ENCODE measurements at regions of chr21 and their contacts with region 1.

Region 1: GRCh38 chr21:33588485-33589335 is at the start of gene DONSON:
- DNase-seq: peak; percentile 63 to 87
- ATAC-seq: peak; percentile 93 to 95
- H3K4me3 ChIP-seq: peak within 1 kb of the TSS; percentile 55 to 75 (median 70)
- H3K27ac ChIP-seq: peak within 1 kb of the TSS; percentile 78 to 90 (median 84)
- H3K4me1 ChIP-seq: peaks cover 10 to 14% of the 10 kb centered on the region in 2 donors
- H3K27me3 ChIP-seq: no peaks in the 10 kb centered on the region
- CTCF ChIP-seq: peak in 2 of 5 experiments; percentile 6
- POLR2A ChIP-seq: peak; percentile 55 to 68
- total RNA-seq, gene DONSON: 3.6 to 5.3 (median 4.2) TPM

Region 2: GRCh38 chr21:33514229-33514628 is 74.5 kb before region 1 on chr21:
- in situ Hi-C with region 1: no loop called
- intact Hi-C with region 1: no loop called
- DNase-seq: no peak
- ATAC-seq: peak in 1 of 2 donors; percentile 30
- H3K4me3 ChIP-seq: no peak overlapping the region
- H3K27ac ChIP-seq: no peak overlapping the region
- H3K4me1 ChIP-seq: no peaks in the 10 kb centered on the region
- H3K27me3 ChIP-seq: no peaks in the 10 kb centered on the region
- CTCF ChIP-seq: no peak
- POLR2A ChIP-seq: no peak

Region 3: DNA sequence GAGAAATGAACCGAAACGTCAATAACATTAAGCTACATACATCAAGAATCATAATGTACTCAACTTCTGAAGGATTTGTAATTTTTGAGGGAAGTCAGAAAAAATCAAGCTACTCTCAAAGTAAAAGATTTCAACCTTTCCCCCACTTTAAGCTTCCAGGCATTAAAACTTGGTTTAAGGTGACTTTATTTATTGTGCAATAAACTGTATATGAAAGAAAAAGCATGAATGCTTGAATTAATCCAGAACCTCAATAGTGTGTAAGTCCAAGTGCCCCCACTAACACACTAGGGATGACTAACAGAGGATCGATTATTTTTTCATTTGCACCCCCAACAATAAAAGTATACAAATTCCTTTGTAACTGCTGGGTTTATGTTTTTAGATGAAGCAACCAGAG is 57.7 kb before region 1 on chr21:
- in situ Hi-C with region 1: no loop called
- intact Hi-C with region 1: no loop called
- DNase-seq: no peak
- ATAC-seq: no peak
- H3K4me3 ChIP-seq: no peak overlapping the region
- H3K27ac ChIP-seq: no peak overlapping the region
- H3K4me1 ChIP-seq: no peaks in the 10 kb centered on the region
- H3K27me3 ChIP-seq: no peaks in the 10 kb centered on the region
- CTCF ChIP-seq: no peak
- POLR2A ChIP-seq: no peak

Region 4: DNA sequence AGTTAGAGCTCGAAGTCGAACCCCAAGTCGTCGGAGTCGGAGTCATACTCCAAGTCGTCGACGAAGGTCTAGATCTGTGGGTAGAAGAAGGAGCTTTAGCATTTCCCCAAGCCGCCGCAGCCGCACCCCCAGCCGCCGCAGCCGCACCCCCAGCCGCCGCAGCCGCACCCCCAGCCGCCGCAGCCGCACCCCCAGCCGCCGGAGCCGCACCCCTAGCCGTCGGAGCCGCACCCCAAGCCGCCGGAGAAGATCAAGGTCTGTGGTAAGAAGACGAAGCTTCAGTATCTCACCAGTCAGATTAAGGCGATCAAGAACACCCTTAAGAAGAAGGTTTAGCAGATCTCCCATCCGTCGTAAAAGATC is 33.7 kb before region 1 on chr21:
- in situ Hi-C with region 1: no loop called
- intact Hi-C with region 1: loop called (anchors 5 kb)
- DNase-seq: no peak
- ATAC-seq: no peak
- H3K4me3 ChIP-seq: no peak overlapping the region
- H3K27ac ChIP-seq: no peak overlapping the region
- H3K4me1 ChIP-seq: peaks cover 11 to 21% of the 10 kb centered on the region in 2 donors
- H3K27me3 ChIP-seq: no peaks in the 10 kb centered on the region
- CTCF ChIP-seq: no peak
- POLR2A ChIP-seq: no peak

Region 5: GRCh38 chr21:33608559-33608958 is 19.8 kb after region 1 on chr21:
- in situ Hi-C with region 1: no loop called
- intact Hi-C with region 1: loop called (anchors 2 kb)
- DNase-seq: no peak
- ATAC-seq: no peak
- H3K4me3 ChIP-seq: no peak overlapping the region
- H3K27ac ChIP-seq: no peak overlapping the region
- H3K4me1 ChIP-seq: peaks cover 10 to 13% of the 10 kb centered on the region in 2 donors
- H3K27me3 ChIP-seq: no peaks in the 10 kb centered on the region
- CTCF ChIP-seq: no peak
- POLR2A ChIP-seq: no peak